Testis (tissue), 5 donors: ENCODE measurements at regions of chr6 and their contacts with region 1.

Region 1: DNA sequence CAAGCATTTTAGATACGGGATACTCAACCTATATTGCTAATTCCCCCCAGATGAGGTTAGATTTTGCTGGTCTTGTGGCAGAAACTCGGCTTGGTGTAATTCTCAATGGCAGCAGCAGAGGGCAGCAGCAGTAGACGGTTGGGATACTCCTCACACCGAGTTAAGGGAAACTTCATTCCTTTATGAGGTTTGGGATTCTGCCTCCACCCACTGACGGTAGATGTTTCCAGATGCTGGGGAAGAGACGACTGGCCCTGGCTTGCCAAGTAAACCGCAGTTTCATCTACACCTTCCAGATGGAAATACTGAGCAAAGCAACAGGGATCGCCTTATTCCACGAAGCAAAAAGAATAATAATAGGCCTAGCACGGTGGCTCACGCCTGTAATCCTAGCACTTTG is 8.2 kb upstream of the TBC1D7 start:
- DNase-seq: peak; percentile 93
- H3K4me3 ChIP-seq: no peak overlapping the region
- H3K27ac ChIP-seq: no peak overlapping the region
- H3K4me1 ChIP-seq: no peaks in the 10 kb centered on the region
- H3K27me3 ChIP-seq: no peaks in the 10 kb centered on the region
- CTCF ChIP-seq: peak; percentile 89 to 94 (median 93)
- POLR2A ChIP-seq: no peak

Region 2: GRCh38 chr6:12911387-12911960 is 425.1 kb before region 1 on chr6:
- intact Hi-C with region 1: loop called (anchors 5 kb)
- DNase-seq: no peak
- H3K4me3 ChIP-seq: no peak overlapping the region
- H3K27ac ChIP-seq: no peak overlapping the region
- H3K4me1 ChIP-seq: no peaks in the 10 kb centered on the region
- H3K27me3 ChIP-seq: no peaks in the 10 kb centered on the region
- CTCF ChIP-seq: peak; percentile 33 to 52 (median 48)
- POLR2A ChIP-seq: no peak

Region 3: GRCh38 chr6:13548500-13549210 is 212.1 kb after region 1 on chr6:
- intact Hi-C with region 1: loop called (anchors 10 kb)
- DNase-seq: no peak
- H3K4me3 ChIP-seq: no peak overlapping the region
- H3K27ac ChIP-seq: no peak overlapping the region
- H3K4me1 ChIP-seq: no peaks in the 10 kb centered on the region
- H3K27me3 ChIP-seq: no peaks in the 10 kb centered on the region
- CTCF ChIP-seq: no peak
- POLR2A ChIP-seq: no peak

Region 4: DNA sequence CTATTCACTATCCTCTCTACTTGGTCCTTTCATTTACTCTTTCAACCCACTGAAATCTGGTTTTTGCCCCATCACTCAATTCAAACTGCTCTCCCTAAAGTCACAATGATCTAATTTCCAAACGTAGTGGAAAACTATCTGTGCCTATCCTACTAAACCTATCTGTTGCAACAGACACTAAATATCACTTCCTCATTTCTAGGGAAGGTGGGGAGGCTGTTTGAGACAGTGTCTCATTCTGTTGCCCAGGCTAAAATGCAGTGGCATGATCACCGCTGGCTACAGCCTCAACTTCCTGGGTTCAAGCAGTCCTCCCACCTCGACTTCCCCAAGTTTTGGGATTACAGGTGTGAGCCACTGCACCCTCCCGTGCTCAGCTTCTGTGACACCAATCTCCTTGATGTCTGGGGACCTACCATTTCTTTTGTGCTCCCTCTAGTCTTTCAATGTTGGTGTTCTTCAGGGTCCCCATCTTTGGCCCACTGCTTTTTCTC is 366.3 kb after region 1 on chr6:
- intact Hi-C with region 1: no loop called
- DNase-seq: no peak
- H3K4me3 ChIP-seq: no peak overlapping the region
- H3K27ac ChIP-seq: no peak overlapping the region
- H3K4me1 ChIP-seq: peaks cover 1% of the 10 kb centered on the region
- H3K27me3 ChIP-seq: no peaks in the 10 kb centered on the region
- CTCF ChIP-seq: no peak
- POLR2A ChIP-seq: no peak